ENCODE measurements at regions of chr6 and their contacts with region 1.

Region 1: DNA sequence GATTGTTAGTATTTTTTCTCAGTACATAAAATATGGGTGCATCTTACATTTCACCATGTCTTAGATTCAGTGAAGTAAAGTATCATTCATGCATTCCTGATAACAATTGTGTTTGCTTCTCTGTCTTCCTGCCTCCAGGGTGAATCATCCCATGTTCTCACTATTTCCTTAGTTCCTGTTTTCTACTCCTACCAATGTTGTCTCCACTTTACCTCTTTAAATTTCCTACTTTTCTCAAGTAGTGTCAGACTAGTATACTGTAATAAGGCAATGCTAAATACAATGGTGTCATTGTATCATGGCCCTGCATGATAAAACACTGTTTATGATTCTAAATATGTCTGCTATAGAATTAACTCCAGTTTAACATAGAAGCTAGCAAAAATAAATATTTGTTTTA is 37.4 kb upstream of the GABRR1 start:
- DNase-seq: no peak
- H3K4me3 ChIP-seq: no peak overlapping the region
- H3K27ac ChIP-seq: no peak overlapping the region
- H3K4me1 ChIP-seq: peaks cover 0 to 12% (median under 1%) of the 10 kb centered on the region in 4 experiments
- H3K27me3 ChIP-seq: no peaks in the 10 kb centered on the region

Region 2: GRCh38 chr6:89050155-89050554 is 204.4 kb before region 1 on chr6:
- CTCF ChIA-PET with region 1: no interaction called
- POLR2A ChIA-PET with region 1: no interaction called
- DNase-seq: no peak
- H3K4me3 ChIP-seq: no peak overlapping the region
- H3K27ac ChIP-seq: no peak overlapping the region
- H3K4me1 ChIP-seq: peaks cover 12 to 30% (median 15%) of the 10 kb centered on the region in 4 experiments
- H3K27me3 ChIP-seq: no peaks in the 10 kb centered on the region

Region 3: GRCh38 chr6:89242574-89243330 is 11.8 kb before region 1 on chr6:
- CTCF ChIA-PET with region 1: interaction called, 11 read pairs
- POLR2A ChIA-PET with region 1: no interaction called
- DNase-seq: peak; percentile 65 to 80 (median 77)
- H3K4me3 ChIP-seq: no peak overlapping the region
- H3K27ac ChIP-seq: no peak overlapping the region
- H3K4me1 ChIP-seq: peaks cover 12 to 36% (median 24%) of the 10 kb centered on the region in 4 experiments
- H3K27me3 ChIP-seq: no peaks in the 10 kb centered on the region

Region 4: GRCh38 chr6:89360415-89360999 is 105.9 kb after region 1 on chr6:
- CTCF ChIA-PET with region 1: no interaction called
- POLR2A ChIA-PET with region 1: no interaction called
- DNase-seq: peak in 2 of 3 donors; percentile 44 to 45
- H3K4me3 ChIP-seq: peak overlapping the region in 1 of 7 experiments; percentile 2
- H3K27ac ChIP-seq: no peak overlapping the region
- H3K4me1 ChIP-seq: peaks cover 23 to 60% (median 42%) of the 10 kb centered on the region in 4 experiments
- H3K27me3 ChIP-seq: no peaks in the 10 kb centered on the region

Region 5: DNA sequence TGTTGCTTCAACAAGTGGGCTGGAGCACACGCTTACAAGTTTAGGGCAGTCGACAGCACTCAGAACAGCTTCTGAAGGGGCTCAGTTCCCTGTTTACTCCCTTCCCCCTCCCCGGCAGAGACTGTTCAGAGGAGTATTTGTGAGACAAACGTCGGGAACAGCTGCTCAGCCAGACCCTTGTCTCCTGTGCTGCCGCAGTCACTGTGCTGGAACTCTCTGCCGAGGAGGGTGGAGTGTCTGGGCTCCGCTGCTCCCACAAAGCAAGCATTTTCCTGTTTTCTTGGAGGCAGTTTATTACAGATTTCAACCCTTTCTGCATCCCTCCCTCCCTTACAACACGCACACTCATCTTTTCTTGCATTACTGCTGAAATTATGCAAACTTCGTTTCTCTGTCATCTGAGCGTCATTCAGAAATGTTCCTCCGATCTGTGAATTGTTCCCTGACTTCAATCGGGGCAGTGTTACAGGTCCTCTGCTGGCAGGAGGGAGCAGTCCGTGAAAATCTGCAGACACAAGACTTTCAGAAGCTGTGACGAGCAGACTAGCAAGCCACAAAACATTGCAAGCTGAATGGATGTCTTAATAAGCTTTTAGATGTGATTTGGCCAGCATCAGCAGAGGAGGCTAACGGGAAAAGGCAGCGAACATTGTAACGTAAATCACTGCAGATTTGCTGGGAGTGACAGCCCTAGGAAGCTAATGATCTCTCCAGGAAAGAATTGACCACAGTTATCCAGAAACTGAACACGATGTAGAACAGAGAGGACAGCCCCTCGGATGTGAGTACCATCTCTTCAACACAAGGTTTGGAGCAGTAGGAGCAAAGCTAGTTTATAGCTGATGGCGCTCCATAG is 307.8 kb after region 1 on chr6:
- CTCF ChIA-PET with region 1: no interaction called
- POLR2A ChIA-PET with region 1: no interaction called
- DNase-seq: no peak
- H3K4me3 ChIP-seq: no peak overlapping the region
- H3K27ac ChIP-seq: no peak overlapping the region
- H3K4me1 ChIP-seq: no peaks in the 10 kb centered on the region
- H3K27me3 ChIP-seq: no peaks in the 10 kb centered on the region